Adrenal gland (tissue), 19 donors: ENCODE measurements at regions of chr17 and their contacts with region 1.

Region 1: DNA sequence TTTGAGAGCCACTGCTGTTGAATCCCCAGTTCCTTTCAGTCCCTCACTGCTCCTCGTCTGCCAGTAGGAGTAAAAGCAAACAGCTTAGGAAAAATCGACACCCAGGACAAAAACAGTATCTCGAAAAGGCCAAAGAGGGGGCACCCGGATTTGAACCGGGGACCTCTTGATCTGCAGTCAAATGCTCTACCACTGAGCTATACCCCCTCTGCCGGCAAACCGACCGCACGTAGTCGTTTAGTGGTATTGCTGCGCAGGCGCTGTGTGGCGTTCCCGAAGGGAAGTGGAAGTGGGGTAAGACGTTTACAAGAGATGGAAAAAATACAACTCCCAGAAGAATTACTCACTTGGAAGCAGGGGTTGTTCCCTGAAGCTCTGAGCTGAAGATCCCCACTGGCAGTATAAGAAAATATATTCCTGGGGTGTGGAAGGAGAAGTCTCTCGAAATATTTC is 2.2 kb upstream of the PLXDC1 start:
- DNase-seq: peak; percentile 85 to 98 (median 93)
- H3K4me3 ChIP-seq: peak overlapping the region; percentile 50 to 81 (median 66)
- H3K27ac ChIP-seq: peak overlapping the region in 4 of 5 donors; percentile 51 to 90 (median 81)
- H3K4me1 ChIP-seq: peaks cover 9 to 12% of the 10 kb centered on the region in 2 donors
- H3K27me3 ChIP-seq: no peaks in the 10 kb centered on the region
- CTCF ChIP-seq: peak in 3 of 6 experiments; percentile 24 to 48 (median 40)
- POLR2A ChIP-seq: peak; percentile 10 to 19

Region 2: DNA sequence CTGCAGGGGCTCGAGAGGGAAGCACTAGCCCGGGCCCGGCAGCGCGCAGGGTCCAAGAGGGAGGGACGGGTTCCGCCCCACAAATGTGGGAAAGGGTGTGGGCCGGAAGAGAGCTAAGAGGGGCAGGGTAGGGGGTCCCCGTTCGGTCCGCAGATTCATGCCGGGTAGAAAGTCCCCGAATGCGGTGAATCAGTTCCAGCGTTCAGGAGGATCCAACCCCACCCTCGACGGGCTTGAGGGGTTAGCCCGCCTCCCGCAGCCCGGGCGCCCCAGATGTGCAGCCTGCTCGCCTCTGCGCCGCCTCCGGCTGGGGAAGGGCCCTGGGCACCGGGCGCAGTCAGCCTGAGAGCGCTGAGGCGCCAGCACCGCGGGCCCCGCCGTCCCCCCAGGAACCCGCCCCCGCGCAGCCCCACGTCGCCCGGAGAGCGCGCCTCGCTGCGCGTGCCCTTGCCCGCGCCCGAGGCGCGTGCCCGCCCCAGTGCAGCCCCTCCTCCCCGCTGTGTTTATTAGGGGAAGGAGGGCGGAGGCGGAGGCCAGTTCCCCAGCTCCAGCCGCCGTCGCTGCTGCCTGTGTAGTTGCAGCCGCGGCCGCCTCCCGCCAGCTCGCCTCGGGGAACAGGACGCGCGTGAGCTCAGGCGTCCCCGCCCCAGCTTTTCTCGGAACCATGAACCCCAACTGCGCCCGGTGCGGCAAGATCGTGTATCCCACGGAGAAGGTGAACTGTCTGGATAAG is 283.9 kb before region 1 on chr17 and contains the start of gene LASP1:
- intact Hi-C with region 1: loop called in 1 of 2 experiments (anchors 10 kb)
- DNase-seq: peak; percentile 82 to 92 (median 87)
- H3K4me3 ChIP-seq: peak within 1 kb of the TSS; percentile 71 to 98 (median 92)
- H3K27ac ChIP-seq: peak within 1 kb of the TSS; percentile 71 to 95 (median 89)
- H3K4me1 ChIP-seq: peaks cover 39 to 48% of the 10 kb centered on the region in 2 donors
- H3K27me3 ChIP-seq: no peaks in the 10 kb centered on the region
- CTCF ChIP-seq: no peak
- POLR2A ChIP-seq: peak; percentile 95 to 97
- total RNA-seq, gene LASP1: 36.4 to 123 (median 104) TPM

Region 3: DNA sequence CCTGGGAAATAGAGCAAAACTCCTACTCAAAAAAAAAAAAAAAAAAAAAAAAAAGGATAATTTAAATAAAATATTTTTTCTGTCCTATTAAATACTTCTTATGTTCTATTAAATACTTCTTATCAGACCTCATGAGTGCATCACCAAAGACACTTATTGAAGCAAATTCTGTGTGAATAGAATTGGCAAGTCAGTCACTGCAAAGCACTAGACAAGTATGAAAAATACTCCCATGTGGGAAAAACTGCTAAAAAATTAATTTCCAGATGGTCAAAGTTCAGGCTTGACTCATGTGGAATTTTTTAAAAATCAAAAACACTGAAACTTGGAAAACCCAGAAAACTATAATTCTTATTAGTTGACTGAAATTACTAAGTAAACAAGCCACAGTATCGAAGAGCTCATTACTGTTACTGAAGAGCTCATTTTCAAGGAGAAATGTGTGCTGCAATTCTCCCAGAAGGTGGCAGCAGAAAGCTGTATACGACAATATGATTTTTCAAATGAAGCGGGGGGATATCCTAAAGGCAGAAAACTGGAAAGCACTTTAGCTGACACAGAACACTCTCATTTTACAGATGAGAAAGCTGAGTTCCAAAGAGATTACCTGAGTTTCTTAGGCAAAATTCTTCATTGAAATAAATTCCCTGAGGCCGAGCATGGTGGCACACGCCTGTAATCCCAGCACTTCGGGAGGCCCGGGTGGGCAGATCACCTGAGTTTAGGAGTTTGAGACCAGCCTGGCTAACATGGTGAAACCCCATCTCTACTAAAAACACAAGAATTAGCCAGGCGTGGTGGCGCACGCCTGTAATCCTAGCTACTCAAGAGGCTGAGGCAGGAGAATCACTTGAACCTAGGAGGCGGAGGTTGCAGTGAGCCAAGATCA is 170.5 kb before region 1 on chr17:
- intact Hi-C with region 1: loop called (anchors 2 to 5 kb)
- DNase-seq: peak in 6 of 7 donors; percentile 28 to 72 (median 46)
- H3K4me3 ChIP-seq: no peak overlapping the region
- H3K27ac ChIP-seq: no peak overlapping the region
- H3K4me1 ChIP-seq: no peaks in the 10 kb centered on the region
- H3K27me3 ChIP-seq: no peaks in the 10 kb centered on the region
- CTCF ChIP-seq: peak; percentile 57 to 86 (median 79)
- POLR2A ChIP-seq: no peak

Region 4: DNA sequence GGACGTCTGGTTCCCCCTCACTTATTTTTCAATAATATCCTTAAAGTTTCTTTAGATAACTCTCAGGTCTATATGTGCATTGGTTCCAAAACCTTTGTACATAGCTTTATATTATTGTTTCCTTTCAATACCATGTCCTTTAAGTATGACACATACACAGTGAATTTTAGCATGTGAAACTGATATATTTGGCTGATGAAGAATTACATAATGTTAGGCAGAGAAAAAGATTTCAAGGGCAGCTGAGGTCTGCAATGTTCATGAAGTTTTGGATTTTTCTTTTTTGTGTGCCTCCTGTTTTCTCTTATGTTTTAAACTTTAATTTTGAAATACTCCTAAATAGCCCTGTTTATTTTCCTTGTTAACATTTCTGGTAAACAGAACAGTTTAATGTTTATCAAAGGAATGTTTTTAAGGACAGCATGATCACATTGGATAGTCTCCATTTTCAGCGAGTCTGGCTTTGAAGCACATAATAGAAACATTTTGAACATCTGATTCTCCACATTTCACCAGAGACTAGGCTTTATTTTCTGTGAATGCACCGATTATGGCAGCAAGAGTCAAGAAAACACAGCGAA is 153.5 kb before region 1 on chr17:
- intact Hi-C with region 1: no loop called
- DNase-seq: no peak
- H3K4me3 ChIP-seq: no peak overlapping the region
- H3K27ac ChIP-seq: peak overlapping the region in 1 of 5 donors; percentile 38
- H3K4me1 ChIP-seq: peaks cover 0 to 6% of the 10 kb centered on the region in 2 donors
- H3K27me3 ChIP-seq: no peaks in the 10 kb centered on the region
- CTCF ChIP-seq: no peak
- POLR2A ChIP-seq: no peak

Region 5: DNA sequence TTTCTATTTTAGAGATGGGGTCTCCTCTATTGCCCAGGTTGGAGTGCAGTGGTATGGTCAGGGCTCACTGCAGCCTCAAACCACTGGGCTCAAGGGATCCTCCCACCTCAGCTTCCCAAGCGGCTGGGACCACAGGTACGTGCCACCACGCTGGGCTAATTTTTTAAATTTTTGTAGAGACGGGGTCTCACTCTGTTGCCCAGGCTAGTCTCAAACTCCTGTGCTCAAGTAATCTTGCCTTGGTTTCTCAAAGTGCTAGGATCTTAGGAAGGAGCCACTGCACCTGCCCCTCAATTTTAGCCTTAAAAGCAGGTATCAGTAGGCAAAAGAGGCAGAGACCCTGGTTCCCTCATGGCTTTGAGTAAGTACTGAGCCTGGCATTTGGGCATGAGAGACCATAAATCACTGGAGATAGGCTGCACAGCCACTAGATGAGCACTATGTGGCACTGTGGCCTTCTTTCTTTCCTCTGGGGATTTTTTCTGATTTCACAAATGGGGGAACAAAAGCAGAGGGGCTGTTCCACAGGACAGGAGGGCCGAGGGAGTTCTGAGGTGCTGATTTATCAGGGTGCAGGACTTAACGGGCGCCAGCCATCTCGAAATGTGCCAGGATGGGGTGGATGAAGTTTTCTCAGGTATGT is 84.4 kb before region 1 on chr17:
- intact Hi-C with region 1: loop called in 1 of 2 experiments (anchors 5 kb)
- DNase-seq: peak in 5 of 7 donors; percentile 26 to 56 (median 38)
- H3K4me3 ChIP-seq: no peak overlapping the region
- H3K27ac ChIP-seq: no peak overlapping the region
- H3K4me1 ChIP-seq: no peaks in the 10 kb centered on the region
- H3K27me3 ChIP-seq: no peaks in the 10 kb centered on the region
- CTCF ChIP-seq: peak in 5 of 6 experiments; percentile 35 to 71 (median 67)
- POLR2A ChIP-seq: no peak